Naive thymus-derived CD4-positive, alpha-beta T cell (primary cell): ENCODE measurements at regions of chr19 and their contacts with region 1.

Region 1: GRCh38 chr19:35716801-35717666 is 769 bp upstream of the KMT2B start:
- DNase-seq: peak; percentile 64 to 99 (median 98)
- ATAC-seq: peak; percentile 92
- H3K4me3 ChIP-seq: peak overlapping the region; percentile 84
- H3K4me3 Mint-ChIP-seq: peak overlapping the region; percentile 88 to 99 (median 96)
- H3K27ac ChIP-seq: peak overlapping the region; percentile 80
- H3K27ac Mint-ChIP-seq: peak overlapping the region; percentile 22 to 98 (median 92)
- H3K4me1 ChIP-seq: peaks cover 37 to 54% of the 10 kb centered on the region in 2 donors
- H3K4me1 Mint-ChIP-seq: peaks cover 40 to 63% (median 57%) of the 10 kb centered on the region in 7 donors
- H3K27me3 ChIP-seq: no peaks in the 10 kb centered on the region
- H3K27me3 Mint-ChIP-seq: no peaks in the 10 kb centered on the region

Region 2: GRCh38 chr19:35545001-35545911 is 171.8 kb before region 1 on chr19 and contains the start of gene TMEM147:
- CTCF ChIA-PET with region 1: no interaction called
- POLR2A ChIA-PET with region 1: no interaction called
- intact Hi-C with region 1: loop called (anchors 1 to 2 kb)
- DNase-seq: peak; percentile 60 to 90 (median 69)
- ATAC-seq: peak; percentile 91
- H3K4me3 ChIP-seq: peak within 1 kb of the TSS; percentile 78
- H3K4me3 Mint-ChIP-seq: peak within 1 kb of the TSS; percentile 79 to 93 (median 89)
- H3K27ac ChIP-seq: peak within 1 kb of the TSS; percentile 84
- H3K27ac Mint-ChIP-seq: peak within 1 kb of the TSS; percentile 52 to 96 (median 90)
- H3K4me1 ChIP-seq: peaks cover 13 to 16% of the 10 kb centered on the region in 2 donors
- H3K4me1 Mint-ChIP-seq: peaks cover 27 to 41% (median 38%) of the 10 kb centered on the region in 7 donors
- H3K27me3 ChIP-seq: no peaks in the 10 kb centered on the region
- H3K27me3 Mint-ChIP-seq: no peaks in the 10 kb centered on the region
- total RNA-seq, gene TMEM147: 24.7 to 54.0 (median 34.6) TPM

Region 3: GRCh38 chr19:35648017-35648961 is 68.7 kb before region 1 on chr19 and contains the start of gene COX6B1:
- CTCF ChIA-PET with region 1: no interaction called
- POLR2A ChIA-PET with region 1: interaction called, 7 read pairs
- intact Hi-C with region 1: loop called (anchors 1 kb)
- DNase-seq: peak; percentile 63 to 95 (median 91)
- ATAC-seq: peak; percentile 80
- H3K4me3 ChIP-seq: peak within 1 kb of the TSS; percentile 95
- H3K4me3 Mint-ChIP-seq: peak within 1 kb of the TSS; percentile 88 to 99 (median 97)
- H3K27ac ChIP-seq: peak within 1 kb of the TSS; percentile 89
- H3K27ac Mint-ChIP-seq: peak within 1 kb of the TSS; percentile 89 to 98 (median 95)
- H3K4me1 ChIP-seq: peaks cover 7 to 25% of the 10 kb centered on the region in 2 donors
- H3K4me1 Mint-ChIP-seq: peaks cover 17 to 67% (median 42%) of the 10 kb centered on the region in 7 donors
- H3K27me3 ChIP-seq: no peaks in the 10 kb centered on the region
- H3K27me3 Mint-ChIP-seq: no peaks in the 10 kb centered on the region
- total RNA-seq, gene COX6B1: 172 to 464 (median 232) TPM

Region 4: GRCh38 chr19:35740423-35741202 is 23.6 kb after region 1 on chr19:
- CTCF ChIA-PET with region 1: interaction called, 3 read pairs
- POLR2A ChIA-PET with region 1: interaction called, 20 read pairs
- intact Hi-C with region 1: loop called (anchors 1 kb)
- DNase-seq: peak; percentile 81 to 95 (median 92)
- ATAC-seq: peak; percentile 78
- H3K4me3 ChIP-seq: peak overlapping the region; percentile 89
- H3K4me3 Mint-ChIP-seq: peak overlapping the region; percentile 87 to 100 (median 92)
- H3K27ac ChIP-seq: peak overlapping the region; percentile 91
- H3K27ac Mint-ChIP-seq: peak overlapping the region; percentile 85 to 99 (median 96)
- H3K4me1 ChIP-seq: peaks cover 27% of the 10 kb centered on the region in 2 donors
- H3K4me1 Mint-ChIP-seq: peaks cover 25 to 67% (median 48%) of the 10 kb centered on the region in 7 donors
- H3K27me3 ChIP-seq: no peaks in the 10 kb centered on the region
- H3K27me3 Mint-ChIP-seq: peaks cover 0 to 2% (median 0%) of the 10 kb centered on the region in 5 donors

Region 5: GRCh38 chr19:35775298-35776110 is 58.5 kb after region 1 on chr19 and contains the start of gene ARHGAP33:
- CTCF ChIA-PET with region 1: no interaction called
- POLR2A ChIA-PET with region 1: interaction called, 3 read pairs
- intact Hi-C with region 1: loop called in 1 of 2 experiments (anchors 1 kb)
- DNase-seq: peak; percentile 96 to 99 (median 98)
- ATAC-seq: peak; percentile 100
- H3K4me3 ChIP-seq: peak within 1 kb of the TSS; percentile 56
- H3K4me3 Mint-ChIP-seq: peak within 1 kb of the TSS; percentile 77 to 94 (median 86)
- H3K27ac ChIP-seq: peak within 1 kb of the TSS; percentile 61
- H3K27ac Mint-ChIP-seq: peak within 1 kb of the TSS in 7 of 9 donors; percentile 12 to 88 (median 84)
- H3K4me1 ChIP-seq: peaks cover 0 to 6% of the 10 kb centered on the region in 2 donors
- H3K4me1 Mint-ChIP-seq: peaks cover 11 to 28% (median 18%) of the 10 kb centered on the region in 7 donors
- H3K27me3 ChIP-seq: no peaks in the 10 kb centered on the region
- H3K27me3 Mint-ChIP-seq: no peaks in the 10 kb centered on the region
- total RNA-seq, gene ARHGAP33: 15.3 to 55.5 (median 23.4) TPM

Region 6: DNA sequence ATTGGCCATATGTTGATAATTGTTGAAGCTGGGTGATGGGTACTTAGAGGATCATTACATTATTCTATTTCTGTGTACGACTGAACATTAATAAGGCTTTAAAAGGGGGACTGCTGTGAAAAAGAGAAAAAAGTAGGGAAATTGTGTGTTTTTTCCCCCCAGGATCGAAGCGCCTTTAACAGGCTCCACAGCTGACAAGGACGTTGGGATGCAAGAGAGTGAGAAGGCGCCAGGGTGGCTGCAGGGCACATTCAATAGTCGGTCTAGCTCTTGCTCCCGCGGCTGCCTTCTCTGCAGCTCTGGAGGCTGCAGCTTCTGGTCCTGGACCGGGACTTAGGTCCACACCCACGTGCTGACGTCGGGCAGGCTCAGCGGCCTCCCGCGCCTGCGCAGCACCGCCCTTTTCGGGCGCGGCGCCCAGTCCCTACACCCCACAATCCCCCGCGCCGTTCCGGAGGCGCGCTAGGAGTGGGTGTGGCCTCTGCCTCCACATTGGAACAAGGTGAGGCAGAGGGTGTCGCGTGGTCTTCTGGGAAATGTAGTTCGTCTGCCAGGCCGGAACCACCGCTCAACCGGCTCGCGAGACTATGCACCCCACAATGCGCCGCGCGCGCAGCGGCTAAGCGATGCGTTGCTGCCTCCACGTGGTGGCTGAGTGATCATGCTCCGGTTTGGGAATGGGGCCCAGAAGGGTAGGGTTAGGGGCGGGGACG is 214.3 kb after region 1 on chr19:
- CTCF ChIA-PET with region 1: interaction called, 3 read pairs
- POLR2A ChIA-PET with region 1: interaction called, 3 read pairs
- intact Hi-C with region 1: loop called (anchors 1 kb)
- DNase-seq: peak; percentile 96 to 100 (median 100)
- ATAC-seq: peak; percentile 98
- H3K4me3 ChIP-seq: peak overlapping the region; percentile 59
- H3K4me3 Mint-ChIP-seq: peak overlapping the region; percentile 61 to 94 (median 83)
- H3K27ac ChIP-seq: peak overlapping the region; percentile 73
- H3K27ac Mint-ChIP-seq: peak overlapping the region; percentile 51 to 98 (median 90)
- H3K4me1 ChIP-seq: peaks cover 32 to 44% of the 10 kb centered on the region in 2 donors
- H3K4me1 Mint-ChIP-seq: peaks cover 33 to 63% (median 49%) of the 10 kb centered on the region in 7 donors
- H3K27me3 ChIP-seq: no peaks in the 10 kb centered on the region
- H3K27me3 Mint-ChIP-seq: no peaks in the 10 kb centered on the region